ENCODE measurements at regions of chr19 and their contacts with region 1.

Region 1: DNA sequence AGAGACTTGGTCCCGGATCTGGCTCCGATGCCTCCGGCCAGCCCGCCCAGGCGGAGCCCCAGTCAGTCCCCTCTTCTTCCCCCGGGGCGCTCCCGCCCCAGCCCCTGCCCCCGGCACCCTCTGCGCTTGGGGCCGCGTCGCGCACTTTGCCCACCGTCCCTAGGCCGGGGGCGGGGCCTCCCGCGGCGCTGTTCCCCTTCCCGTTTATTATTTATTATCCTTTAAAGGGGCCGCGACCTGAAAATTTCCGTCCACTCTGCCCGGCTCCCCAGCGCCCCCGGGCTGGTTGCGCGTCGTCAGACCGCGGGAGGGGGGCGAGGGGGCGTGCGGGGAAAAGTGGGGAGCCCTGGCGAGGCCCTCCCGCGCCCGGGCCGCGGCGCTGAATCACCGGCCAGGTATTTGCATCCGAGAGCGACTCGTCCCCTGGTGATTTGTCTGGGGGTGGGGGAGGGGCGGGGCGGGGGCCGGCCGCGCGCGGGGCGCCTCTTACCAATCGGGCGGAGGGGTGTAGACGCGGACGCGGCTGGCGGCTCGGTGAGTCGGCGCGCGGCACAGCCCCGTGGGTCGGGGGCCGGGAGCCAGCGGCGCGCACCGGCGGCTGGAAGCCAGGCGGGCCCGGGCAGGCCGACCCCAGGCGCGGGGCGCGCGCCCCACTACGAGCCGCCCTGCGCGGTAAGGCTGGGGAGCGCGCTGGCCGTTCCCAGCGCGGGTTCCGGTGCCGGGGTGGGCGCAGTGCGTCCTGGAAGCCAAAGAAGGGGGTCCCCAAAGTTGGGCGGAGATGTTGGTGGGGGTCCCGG is at the start of gene ARID3A:
- DNase-seq: peak; percentile 95
- H3K4me3 ChIP-seq: peak within 1 kb of the TSS; percentile 86 to 91
- H3K27ac ChIP-seq: peak within 1 kb of the TSS; percentile 54 to 85
- H3K4me1 ChIP-seq: peaks cover 7 to 18% of the 10 kb centered on the region in 2 experiments; a peak in 1 of 4 replicates
- H3K27me3 ChIP-seq: peaks cover 8% of the 10 kb centered on the region
- CTCF ChIP-seq: no peak
- EP300 ChIP-seq: no peak; a peak in 1 of 4 replicates
- RAD21 ChIP-seq: no peak; the same call in 1 of the 2 replicates
- polyA plus RNA-seq, gene ARID3A: 4.4 and 8.6 TPM in 2 replicates

Region 2: GRCh38 chr19:771332-771785 is 154.4 kb before region 1 on chr19:
- CTCF ChIA-PET with region 1: interaction called, 13 read pairs
- POLR2A ChIA-PET with region 1: no interaction called
- DNase-seq: peak; percentile 80
- H3K4me3 ChIP-seq: no peak overlapping the region
- H3K27ac ChIP-seq: no peak overlapping the region
- H3K4me1 ChIP-seq: no peaks in the 10 kb centered on the region
- H3K27me3 ChIP-seq: no peaks in the 10 kb centered on the region
- CTCF ChIP-seq: peak; percentile 50
- EP300 ChIP-seq: no peak
- RAD21 ChIP-seq: peak; percentile 33

Region 3: DNA sequence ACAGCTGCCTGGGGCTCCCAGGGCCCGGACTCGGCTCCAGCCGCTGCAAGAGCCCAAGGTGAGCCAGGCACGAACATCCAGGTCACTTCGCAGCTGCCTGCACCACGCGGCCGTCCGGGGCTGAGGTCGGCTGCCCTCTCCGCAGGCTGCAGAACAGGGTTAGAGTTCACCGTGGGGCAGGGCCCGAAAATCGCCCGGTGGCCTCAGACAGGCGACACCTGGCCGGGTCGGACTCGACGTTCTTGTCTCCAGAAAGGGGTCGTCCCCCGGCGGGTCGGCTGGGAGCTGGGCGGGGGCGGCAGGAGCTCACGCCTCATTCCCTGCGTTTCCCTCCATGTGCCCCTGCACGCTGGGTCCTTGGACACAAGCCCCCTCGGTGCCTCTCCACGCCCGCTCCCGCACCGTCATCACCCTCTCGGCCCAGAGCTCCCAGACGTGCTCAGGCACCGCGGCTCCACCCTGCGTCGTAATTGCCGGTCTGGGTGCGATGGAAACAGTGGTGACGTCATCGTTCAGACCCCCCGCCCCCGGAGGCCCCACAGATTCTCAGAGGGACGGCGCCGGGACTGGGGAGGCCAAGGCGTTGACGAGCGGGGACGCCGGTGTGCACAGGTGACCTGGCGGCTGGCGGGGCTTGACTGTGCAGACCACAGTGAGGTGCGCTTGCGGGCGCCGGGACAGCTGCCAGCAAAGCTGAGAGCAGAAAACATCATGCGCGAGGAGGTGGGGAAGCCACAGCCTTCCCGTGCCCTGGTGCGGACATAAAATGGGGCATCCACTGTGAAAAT is 70.5 kb after region 1 on chr19:
- CTCF ChIA-PET with region 1: interaction called, 15 read pairs
- POLR2A ChIA-PET with region 1: interaction called, 4 read pairs
- DNase-seq: peak; percentile 83
- H3K4me3 ChIP-seq: peak overlapping the region; percentile 13 to 28; a peak in 2 of 4 replicates
- H3K27ac ChIP-seq: no peak overlapping the region
- H3K4me1 ChIP-seq: peaks cover 0 to 9% of the 10 kb centered on the region in 2 experiments; a peak in 1 of 4 replicates
- H3K27me3 ChIP-seq: peaks cover 36% of the 10 kb centered on the region; the same call in 1 of the 2 replicates
- CTCF ChIP-seq: no peak
- EP300 ChIP-seq: no peak
- RAD21 ChIP-seq: no peak

Measured in SK-N-SH (cell line).